Esophagus squamous epithelium (tissue), 5 donors: ENCODE measurements at regions of chr9 and their contacts with region 1.

Region 1: GRCh38 chr9:10059044-10059443 is 553.8 kb downstream of the PTPRD start:
- DNase-seq: no peak
- H3K4me3 ChIP-seq: no peak overlapping the region
- H3K27ac ChIP-seq: no peak overlapping the region
- H3K4me1 ChIP-seq: peaks cover 0 to 17% (median 0%) of the 10 kb centered on the region in 3 donors
- H3K27me3 ChIP-seq: no peaks in the 10 kb centered on the region
- CTCF ChIP-seq: no peak
- POLR2A ChIP-seq: no peak

Region 2: GRCh38 chr9:9912459-9912858 is 146.6 kb before region 1 on chr9:
- intact Hi-C with region 1: no loop called
- DNase-seq: no peak
- H3K4me3 ChIP-seq: no peak overlapping the region
- H3K27ac ChIP-seq: no peak overlapping the region
- H3K4me1 ChIP-seq: no peaks in the 10 kb centered on the region
- H3K27me3 ChIP-seq: no peaks in the 10 kb centered on the region
- CTCF ChIP-seq: peak in 2 of 6 experiments; percentile 8 to 25
- POLR2A ChIP-seq: no peak

Region 3: DNA sequence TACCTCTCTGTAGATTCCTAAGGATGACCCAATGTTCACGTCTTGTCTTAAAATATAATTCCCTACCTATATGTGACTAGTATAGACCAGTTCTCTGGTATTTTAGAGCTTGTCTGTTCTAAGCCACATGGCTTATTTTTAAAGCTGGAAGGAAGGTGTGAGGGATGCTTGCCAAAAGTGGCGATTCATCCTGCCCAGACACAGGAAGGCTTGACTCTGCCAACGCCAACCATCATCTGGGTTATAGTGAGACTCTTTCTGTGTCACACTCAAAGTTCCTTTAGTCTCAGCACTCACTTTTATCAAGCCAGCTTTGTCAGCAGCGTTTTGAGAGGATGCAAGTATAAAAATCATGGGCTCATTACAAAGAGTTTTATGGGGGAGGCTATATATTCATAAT is 53.8 kb after region 1 on chr9:
- intact Hi-C with region 1: loop called (anchors 10 kb)
- DNase-seq: no peak
- H3K4me3 ChIP-seq: no peak overlapping the region
- H3K27ac ChIP-seq: no peak overlapping the region
- H3K4me1 ChIP-seq: no peaks in the 10 kb centered on the region
- H3K27me3 ChIP-seq: no peaks in the 10 kb centered on the region
- CTCF ChIP-seq: no peak
- POLR2A ChIP-seq: no peak